ENCODE measurements at regions of chr16 and their contacts with region 1.

Region 1: DNA sequence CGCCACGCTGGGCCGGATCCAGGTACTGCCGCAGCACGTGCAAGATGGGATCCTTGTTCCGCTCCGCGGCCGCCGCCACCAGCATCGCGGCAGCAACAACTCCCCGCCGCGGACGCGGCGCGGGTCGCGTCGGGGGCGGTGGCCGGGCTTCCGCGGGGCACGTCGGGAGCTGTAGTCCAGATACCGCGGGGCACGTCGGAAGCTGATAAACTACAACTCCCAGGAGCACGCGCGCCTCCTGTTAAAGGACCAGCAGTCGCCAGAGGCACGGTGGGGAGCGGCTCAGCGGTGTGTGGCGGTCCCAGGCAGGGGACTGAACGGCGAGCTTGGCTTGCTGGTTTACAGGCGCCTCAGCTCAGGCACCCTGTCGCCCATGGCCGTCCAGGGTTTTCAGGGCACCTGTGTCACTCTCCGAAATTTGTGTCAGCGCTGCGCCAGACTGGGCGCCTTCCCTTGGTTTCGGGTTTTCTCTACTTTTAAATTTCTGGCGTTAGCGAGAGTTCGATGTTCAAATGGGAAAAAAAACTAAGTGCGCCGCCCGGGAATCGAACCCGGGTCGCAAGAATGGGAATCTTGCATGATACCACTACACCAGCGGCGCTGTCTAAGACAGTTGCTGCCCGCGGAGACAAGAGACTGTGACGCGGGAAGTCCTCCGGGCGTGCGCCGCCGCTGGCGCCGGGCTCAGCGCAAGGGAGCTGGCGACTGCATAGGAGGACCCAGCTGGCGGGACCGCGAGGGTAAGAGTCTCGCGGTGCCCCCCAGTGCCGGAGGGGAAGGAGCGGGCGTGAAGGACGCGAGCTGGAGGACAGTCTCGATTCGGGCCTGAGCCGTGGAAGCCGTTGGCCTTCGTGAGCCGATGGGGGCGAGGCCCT is at the start of gene METTL26:
- DNase-seq: peak; percentile 98 to 99
- ATAC-seq: peak; percentile 93
- H3K4me3 ChIP-seq: peak within 1 kb of the TSS; percentile 84 to 86
- H3K27ac ChIP-seq: peak within 1 kb of the TSS in 1 of 2 donors; percentile 89
- H3K4me1 ChIP-seq: no peaks in the 10 kb centered on the region
- H3K27me3 ChIP-seq: no peaks in the 10 kb centered on the region
- total RNA-seq, gene METTL26: 45.2 to 64.8 TPM

Region 2: DNA sequence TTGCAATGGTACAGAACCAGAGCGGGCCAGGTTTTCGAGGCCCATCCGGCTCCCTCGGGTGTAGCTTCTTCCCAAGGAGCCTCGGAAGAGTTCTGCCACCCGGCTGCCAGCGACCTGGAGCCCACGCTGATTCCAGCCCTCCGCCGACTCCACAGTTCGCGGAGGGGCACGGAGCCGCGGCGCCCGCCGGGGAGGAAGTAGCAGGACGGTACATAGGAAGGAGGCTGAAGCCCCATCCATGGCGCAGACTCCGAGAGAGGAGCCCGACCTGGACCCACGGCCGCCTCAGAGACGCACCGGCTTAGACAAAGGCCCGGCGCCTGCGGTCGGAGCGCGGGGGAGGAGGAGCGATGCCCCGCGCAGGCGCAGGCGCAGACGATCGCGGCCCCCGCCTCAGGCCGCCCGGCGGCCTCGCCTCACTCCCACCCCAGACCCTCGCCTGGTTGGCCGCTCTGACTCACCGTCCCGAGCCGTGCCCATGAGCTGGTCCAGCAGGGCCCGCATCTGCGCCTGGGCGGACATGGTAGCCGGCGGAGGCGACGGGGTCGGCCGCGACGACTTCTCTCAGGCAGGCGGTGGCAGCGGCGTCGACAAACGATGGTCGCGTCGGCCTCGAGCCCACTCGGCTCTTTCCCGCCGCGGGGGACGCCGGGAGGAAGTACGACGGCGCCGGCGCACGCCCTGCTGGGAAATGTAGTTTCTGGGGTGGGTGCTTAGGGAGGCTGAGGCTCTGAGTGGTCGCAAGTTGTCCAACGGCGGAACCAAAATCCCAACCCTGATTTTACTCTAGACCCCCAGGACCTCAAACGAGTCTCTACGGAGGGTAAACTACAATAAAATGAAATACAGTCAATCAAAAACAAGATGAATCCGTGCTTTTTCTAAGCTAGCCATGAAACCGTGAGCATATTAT is 407.4 kb before region 1 on chr16 and contains the start of gene LUC7L:
- intact Hi-C with region 1: no loop called
- DNase-seq: peak; percentile 93 to 97
- ATAC-seq: peak; percentile 96
- H3K4me3 ChIP-seq: peak within 1 kb of the TSS; percentile 47 to 74
- H3K27ac ChIP-seq: peak within 1 kb of the TSS in 1 of 2 donors; percentile 98
- H3K4me1 ChIP-seq: no peaks in the 10 kb centered on the region
- H3K27me3 ChIP-seq: no peaks in the 10 kb centered on the region
- total RNA-seq, gene LUC7L: 69.5 to 98.5 TPM

Region 3: DNA sequence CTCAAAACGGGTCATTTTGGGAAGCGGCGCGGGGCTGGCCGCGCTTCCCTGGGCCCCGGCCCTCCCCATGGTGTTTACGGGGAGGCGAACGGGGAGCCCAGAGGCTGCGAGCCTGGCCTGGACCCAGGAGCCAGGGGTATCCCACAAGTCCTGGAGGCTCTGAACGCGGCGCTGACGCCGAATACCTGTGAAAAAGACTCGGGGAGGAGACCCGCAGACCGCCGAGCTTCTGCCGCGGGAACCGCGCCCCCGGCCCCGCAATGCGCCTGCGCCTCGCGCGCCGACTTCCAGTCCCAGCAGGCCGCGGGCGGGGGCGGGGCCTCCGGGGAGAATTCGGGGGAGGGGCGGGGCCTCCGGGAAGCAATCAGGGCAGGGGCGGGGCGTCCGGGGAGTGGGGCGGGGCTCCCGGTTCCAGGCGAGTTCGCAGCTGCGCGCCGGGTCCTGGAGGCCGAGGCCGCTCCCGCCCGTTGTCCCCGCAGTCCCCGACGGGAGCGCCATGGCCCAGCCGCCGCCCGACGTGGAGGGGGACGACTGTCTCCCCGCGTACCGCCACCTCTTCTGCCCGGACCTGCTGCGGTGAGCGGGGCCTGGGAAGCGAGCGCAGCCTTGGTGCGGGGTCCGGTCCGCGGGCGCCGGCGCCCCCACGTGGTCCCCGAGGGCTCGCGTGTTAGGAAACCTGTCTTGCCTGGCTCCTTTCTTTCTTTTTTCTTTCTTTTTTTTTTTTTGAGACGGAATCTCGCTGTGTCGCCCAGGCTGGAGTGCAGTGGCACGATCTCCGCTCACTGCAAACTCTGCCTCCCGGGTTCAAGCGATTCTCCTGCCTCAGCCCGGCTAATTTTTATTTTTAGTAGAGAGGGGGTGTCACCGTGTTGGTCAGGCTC is 234.7 kb before region 1 on chr16 and contains the start of gene DECR2:
- intact Hi-C with region 1: no loop called
- DNase-seq: peak; percentile 97 to 100
- ATAC-seq: peak; percentile 95
- H3K4me3 ChIP-seq: peak within 1 kb of the TSS; percentile 15 to 58
- H3K27ac ChIP-seq: peak within 1 kb of the TSS in 1 of 2 donors; percentile 8
- H3K4me1 ChIP-seq: no peaks in the 10 kb centered on the region
- H3K27me3 ChIP-seq: no peaks in the 10 kb centered on the region
- total RNA-seq, gene DECR2: 10.9 to 15.9 TPM

Region 4: DNA sequence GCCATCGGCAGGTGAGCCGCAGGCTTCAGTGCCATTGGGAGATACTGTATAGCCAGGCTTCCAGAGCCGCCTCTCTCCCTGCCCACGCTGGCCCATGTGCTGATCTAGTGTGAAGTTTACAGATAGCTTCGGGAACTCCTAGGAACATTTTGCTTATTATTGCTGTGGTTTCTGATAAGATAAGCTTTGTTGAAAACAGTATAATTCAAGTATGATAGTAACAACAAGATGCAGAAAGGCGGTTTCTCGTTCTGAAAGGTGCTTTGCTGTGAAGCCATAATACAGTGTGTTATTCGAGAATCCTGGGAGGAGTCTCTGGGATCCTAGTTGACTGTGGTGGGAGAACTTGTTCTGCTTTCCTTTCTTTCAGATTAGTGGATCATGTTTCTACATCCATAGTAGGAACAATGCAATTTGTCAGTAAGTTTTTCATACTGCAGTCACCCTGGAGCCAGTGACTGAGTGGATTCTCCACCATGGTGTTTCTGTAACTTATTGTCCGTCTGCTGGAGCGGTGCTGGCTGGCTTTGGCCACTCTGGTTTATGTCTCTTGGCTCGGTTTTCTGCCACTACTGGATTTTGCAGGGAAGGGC is 179.5 kb before region 1 on chr16:
- intact Hi-C with region 1: no loop called
- DNase-seq: no peak
- ATAC-seq: peak; percentile 82
- H3K4me3 ChIP-seq: no peak overlapping the region
- H3K27ac ChIP-seq: no peak overlapping the region
- H3K4me1 ChIP-seq: no peaks in the 10 kb centered on the region
- H3K27me3 ChIP-seq: no peaks in the 10 kb centered on the region

Region 5: DNA sequence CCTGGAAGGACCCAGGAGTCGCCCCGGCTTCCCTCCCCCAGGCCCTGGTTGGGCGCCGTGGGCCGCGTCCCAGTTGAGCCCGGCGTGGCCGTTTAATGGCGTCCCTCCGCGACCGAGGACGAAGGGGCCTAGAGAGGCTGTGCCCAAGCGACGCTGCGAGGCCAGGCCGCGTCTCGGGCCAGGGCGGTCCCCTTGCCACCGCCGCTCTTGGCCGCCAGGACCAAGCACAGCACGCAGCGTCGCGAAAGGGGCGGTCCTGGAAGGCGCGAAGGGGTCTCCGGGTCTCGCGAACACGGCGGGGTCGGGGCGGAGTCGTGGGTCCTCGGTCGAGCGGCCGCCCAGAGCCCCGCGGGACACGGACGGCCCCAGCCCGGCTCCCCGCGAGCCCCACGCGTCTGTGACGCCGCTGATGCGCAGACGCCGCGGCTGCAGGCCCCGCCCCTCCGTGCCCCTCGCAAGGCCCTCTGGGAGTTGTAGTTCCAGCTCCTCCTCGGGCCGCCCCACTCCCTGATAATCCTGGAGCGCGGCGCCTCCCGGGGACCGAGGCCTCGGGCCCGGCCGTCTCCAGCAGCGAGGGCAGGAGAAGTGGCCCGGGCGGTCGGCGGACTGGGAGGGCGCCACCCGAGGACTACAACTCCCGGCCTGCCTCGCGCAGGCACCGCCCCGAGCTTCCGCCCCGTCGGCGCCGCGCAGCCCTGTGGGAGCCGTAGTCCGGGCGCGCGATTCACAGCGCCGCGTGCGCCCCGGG is 109.3 kb before region 1 on chr16 and contains the start of gene CAPN15:
- intact Hi-C with region 1: no loop called
- DNase-seq: peak; percentile 92 to 95
- ATAC-seq: peak; percentile 94
- H3K4me3 ChIP-seq: peak within 1 kb of the TSS; percentile 73 to 84
- H3K27ac ChIP-seq: peak within 1 kb of the TSS in 1 of 2 donors; percentile 92
- H3K4me1 ChIP-seq: no peaks in the 10 kb centered on the region
- H3K27me3 ChIP-seq: no peaks in the 10 kb centered on the region
- total RNA-seq, gene CAPN15: 27.9 to 33.9 TPM

Region 6: DNA sequence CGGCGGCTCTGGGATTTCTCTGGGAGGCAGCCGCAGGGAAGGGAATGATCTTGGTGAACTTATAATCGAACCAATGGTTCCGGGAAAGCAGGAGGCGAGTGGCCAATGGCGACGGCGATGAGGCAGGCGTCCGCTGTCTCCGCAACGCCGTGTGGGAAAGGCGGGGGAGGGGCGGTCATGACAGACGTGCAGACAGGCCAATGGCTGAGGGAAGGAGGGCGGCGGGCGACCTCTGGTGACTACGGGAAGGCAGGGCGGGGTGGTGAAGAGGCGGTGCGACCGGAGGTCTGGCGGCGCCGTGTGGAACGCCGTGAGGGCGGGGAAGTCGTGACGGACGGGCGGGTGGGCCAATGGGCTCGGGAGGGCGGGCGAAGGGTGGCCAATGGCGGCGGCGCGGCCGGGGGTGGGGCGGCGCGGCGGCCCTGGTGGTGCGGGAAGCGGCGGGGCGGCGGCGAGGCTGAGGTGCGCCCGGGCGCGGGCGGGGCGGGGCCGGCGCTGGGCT is 46.7 kb before region 1 on chr16 and contains the start of gene RAB40C:
- intact Hi-C with region 1: loop called in 1 of 2 experiments (anchors 5 kb)
- DNase-seq: peak; percentile 100
- ATAC-seq: peak; percentile 97
- H3K4me3 ChIP-seq: peak within 1 kb of the TSS; percentile 69 to 82
- H3K27ac ChIP-seq: peak within 1 kb of the TSS; percentile 71 to 87
- H3K4me1 ChIP-seq: no peaks in the 10 kb centered on the region
- H3K27me3 ChIP-seq: no peaks in the 10 kb centered on the region
- total RNA-seq, gene RAB40C: 17.9 to 19.6 TPM

Measured in aorta (tissue), 5 donors.